ENCODE measurements at regions of chr17 and their contacts with region 1.

Region 1: GRCh38 chr17:2336215-2336851 is at the start of gene TSR1:
- DNase-seq: peak; percentile 90
- ATAC-seq: peak; percentile 81
- H3K4me3 Mint-ChIP-seq: no peak within 1 kb of the TSS; the same call in 1 of the 2 replicates
- H3K27ac Mint-ChIP-seq: peak within 1 kb of the TSS; percentile 99
- H3K4me1 Mint-ChIP-seq: peaks cover 4% of the 10 kb centered on the region
- H3K27me3 Mint-ChIP-seq: no peaks in the 10 kb centered on the region
- CTCF ChIP-seq: no peak
- total RNA-seq, gene TSR1: 59.1 to 74.3 TPM (median 59.7 TPM) in 3 replicates

Region 2: GRCh38 chr17:2303204-2304188 is 32.8 kb before region 1 on chr17 and contains the starts of genes SMG6 and SRR:
- CTCF ChIA-PET with region 1: interaction called, 13 read pairs
- POLR2A ChIA-PET with region 1: interaction called, 6 read pairs
- DNase-seq: peak; percentile 92
- ATAC-seq: peak; percentile 93
- H3K4me3 Mint-ChIP-seq: peak within 1 kb of the TSS; percentile 86
- H3K27ac Mint-ChIP-seq: peak within 1 kb of the TSS; percentile 74
- H3K4me1 Mint-ChIP-seq: peaks cover 11% of the 10 kb centered on the region
- H3K27me3 Mint-ChIP-seq: peaks cover 4% of the 10 kb centered on the region
- CTCF ChIP-seq: no peak
- total RNA-seq, gene SMG6: 25.6 to 27.2 TPM (median 25.9 TPM) in 3 replicates
- total RNA-seq, gene SRR: 4.6 to 6.9 TPM (median 5.1 TPM) in 3 replicates

Region 3: DNA sequence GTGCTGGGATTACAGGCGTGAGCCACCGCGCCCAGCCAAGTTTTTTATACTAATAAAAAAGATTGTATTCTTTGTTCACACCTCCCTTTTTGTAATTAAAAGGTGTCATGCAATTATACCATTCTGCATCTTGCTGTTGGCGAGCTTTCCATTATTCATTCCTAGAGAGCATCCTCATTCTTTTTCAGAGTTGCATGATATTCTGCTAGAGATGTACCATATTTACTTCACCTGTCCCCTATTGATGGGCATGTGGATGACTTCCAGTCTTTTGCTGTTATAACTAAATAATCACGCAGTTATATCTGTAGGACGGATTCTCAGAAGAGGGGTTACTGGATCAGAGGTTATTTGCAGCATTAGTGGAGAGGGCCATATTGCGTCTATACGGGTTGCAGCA is 18.0 kb after region 1 on chr17:
- CTCF ChIA-PET with region 1: interaction called, 119 read pairs
- POLR2A ChIA-PET with region 1: interaction called, 12 read pairs
- DNase-seq: no peak
- ATAC-seq: no peak
- H3K4me3 Mint-ChIP-seq: no peak overlapping the region
- H3K27ac Mint-ChIP-seq: no peak overlapping the region
- H3K4me1 Mint-ChIP-seq: peaks cover 14% of the 10 kb centered on the region; the same call in 1 of the 2 replicates
- H3K27me3 Mint-ChIP-seq: no peaks in the 10 kb centered on the region
- CTCF ChIP-seq: no peak

Measured in WTC11 (cell line).